ENCODE measurements at regions of chr2 and their contacts with region 1.

Region 1: GRCh38 chr2:16745466-16745865 is 79.8 kb upstream of the CYRIA start:
- DNase-seq: no peak
- ATAC-seq: no peak
- H3K4me3 Mint-ChIP-seq: no peak overlapping the region
- H3K27ac Mint-ChIP-seq: no peak overlapping the region
- H3K4me1 Mint-ChIP-seq: no peaks in the 10 kb centered on the region
- H3K27me3 Mint-ChIP-seq: no peaks in the 10 kb centered on the region
- CTCF ChIP-seq: no peak

Region 2: DNA sequence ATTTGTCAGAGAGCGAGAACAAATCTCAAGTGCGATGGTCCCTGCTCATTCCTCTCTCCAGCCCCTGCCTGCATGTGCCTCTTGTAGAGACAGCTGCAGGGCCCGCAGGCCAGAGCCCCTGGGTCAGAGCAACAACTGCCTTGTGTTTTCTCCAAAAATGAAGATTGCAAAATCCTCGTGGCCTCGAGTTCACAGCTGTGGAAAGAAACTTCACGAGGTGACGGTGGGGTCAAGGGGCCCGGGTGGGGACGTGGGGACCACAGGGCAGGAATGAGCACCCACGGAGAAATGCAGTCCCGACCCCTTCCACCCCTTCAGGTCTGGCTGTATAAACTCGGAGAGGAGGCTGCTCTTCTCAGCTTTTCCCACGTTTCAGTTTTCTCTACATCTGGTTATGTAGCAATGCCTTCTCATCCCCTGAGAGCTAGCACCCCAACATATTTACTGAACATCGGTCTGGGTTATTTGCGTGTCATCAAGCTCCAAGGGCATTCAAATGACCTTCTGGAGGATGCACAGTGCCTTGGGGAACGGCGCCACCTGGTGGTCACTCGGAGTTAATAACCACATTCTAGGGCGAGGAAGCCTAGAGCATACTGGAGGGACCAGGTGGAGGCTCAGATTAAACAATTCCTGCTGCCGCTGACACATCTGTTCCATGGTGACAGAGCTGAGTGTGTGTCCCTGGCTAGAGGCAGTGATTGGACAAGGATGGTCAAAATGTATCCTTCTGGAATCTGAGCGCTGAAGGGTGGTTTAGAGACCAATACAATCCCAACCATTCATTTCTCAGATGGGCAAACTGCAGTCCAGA is 11.6 kb after region 1 on chr2:
- CTCF ChIA-PET with region 1: interaction called, 14 read pairs
- POLR2A ChIA-PET with region 1: no interaction called
- DNase-seq: peak; percentile 81
- ATAC-seq: peak; percentile 96
- H3K4me3 Mint-ChIP-seq: no peak overlapping the region
- H3K27ac Mint-ChIP-seq: peak overlapping the region; percentile 85; the same call in 1 of the 2 replicates
- H3K4me1 Mint-ChIP-seq: peaks cover 2% of the 10 kb centered on the region
- H3K27me3 Mint-ChIP-seq: no peaks in the 10 kb centered on the region; the same call in 1 of the 2 replicates
- CTCF ChIP-seq: peak; percentile 95